PC-3 (cell line): ENCODE measurements at regions of chr9 and their contacts with region 1.

Region 1: DNA sequence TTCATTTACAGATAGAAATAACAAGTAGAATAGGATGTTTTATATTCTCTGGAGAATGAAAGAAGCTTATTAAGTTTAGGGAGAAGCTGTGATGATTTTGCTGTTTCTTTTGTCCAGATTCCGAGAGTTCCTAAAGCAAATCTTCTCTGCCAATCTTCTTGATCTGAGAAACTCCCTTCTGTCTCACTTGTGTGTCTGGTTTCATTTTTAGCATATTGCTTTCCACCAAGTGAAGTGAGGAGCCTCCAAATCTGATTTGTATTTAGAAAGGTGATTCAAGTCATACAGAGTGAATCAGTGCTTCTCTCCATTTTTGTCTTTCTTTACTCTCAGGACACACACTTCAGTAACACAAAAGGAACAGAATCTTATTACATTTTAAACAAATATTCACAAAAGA is 48.4 kb downstream of the STX17 start:
- DNase-seq: no peak
- ATAC-seq: no peak
- H3K4me3 ChIP-seq: no peak overlapping the region
- H3K27ac ChIP-seq: no peak overlapping the region
- H3K4me1 ChIP-seq: no peaks in the 10 kb centered on the region
- H3K27me3 ChIP-seq: no peaks in the 10 kb centered on the region
- CTCF ChIP-seq: no peak

Region 2: GRCh38 chr9:99807276-99807852 is 147.5 kb before region 1 on chr9:
- CTCF ChIA-PET with region 1: no interaction called
- POLR2A ChIA-PET with region 1: no interaction called
- intact Hi-C with region 1: loop called (anchors 10 kb)
- DNase-seq: peak; percentile 78
- ATAC-seq: peak; percentile 45; the same call in 1 of the 2 replicates
- H3K4me3 ChIP-seq: no peak overlapping the region
- H3K27ac ChIP-seq: no peak overlapping the region
- H3K4me1 ChIP-seq: peaks cover 8% of the 10 kb centered on the region
- H3K27me3 ChIP-seq: no peaks in the 10 kb centered on the region
- CTCF ChIP-seq: peak; percentile 79

Region 3: DNA sequence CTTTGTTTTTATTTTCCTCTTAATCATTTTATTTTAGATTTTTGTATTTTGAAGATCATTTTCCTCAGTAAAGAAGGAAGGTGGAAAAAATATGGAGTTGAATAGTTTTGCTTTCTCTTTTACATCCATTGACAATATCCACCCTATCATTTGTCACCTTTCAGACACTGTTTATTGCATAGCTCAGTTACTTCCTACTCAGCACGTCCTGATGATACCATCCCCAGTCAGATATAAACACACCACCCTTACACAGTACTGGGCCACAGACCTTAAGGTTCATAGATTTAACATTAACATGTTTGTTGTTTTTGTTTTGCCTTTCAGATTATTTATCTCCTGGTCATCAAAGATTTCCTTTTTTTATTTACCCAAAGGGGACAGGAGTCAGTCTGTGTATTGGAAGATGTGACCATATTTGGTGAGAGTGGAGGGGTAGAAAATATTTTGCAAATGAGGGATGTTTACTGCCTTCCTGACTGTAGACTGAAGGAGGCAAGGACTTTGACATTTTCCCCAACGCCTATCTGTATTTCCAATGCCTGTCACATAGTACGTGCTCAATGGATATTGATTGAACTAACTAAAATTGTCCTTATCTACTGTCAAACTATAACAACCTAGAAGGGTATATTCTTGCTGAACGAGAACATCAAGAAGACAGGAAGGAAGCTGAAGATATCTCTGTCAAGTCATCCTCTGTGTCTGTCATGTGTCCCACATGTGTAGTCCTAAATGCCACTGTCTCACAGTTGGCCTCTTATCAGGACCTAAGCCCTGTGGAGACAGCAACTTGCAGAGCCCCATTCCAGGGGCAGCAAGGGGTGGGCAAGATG is 32.7 kb before region 1 on chr9:
- CTCF ChIA-PET with region 1: no interaction called
- POLR2A ChIA-PET with region 1: no interaction called
- intact Hi-C with region 1: no loop called
- DNase-seq: no peak
- ATAC-seq: no peak
- H3K4me3 ChIP-seq: no peak overlapping the region
- H3K27ac ChIP-seq: no peak overlapping the region
- H3K4me1 ChIP-seq: no peaks in the 10 kb centered on the region
- H3K27me3 ChIP-seq: no peaks in the 10 kb centered on the region
- CTCF ChIP-seq: no peak